IMR-90 (cell line): ENCODE measurements at regions of chr10 and their contacts with region 1.

Region 1: GRCh38 chr10:91908337-91909116 is 759 bp downstream of the FGFBP3 start:
- DNase-seq: peak; percentile 67
- ATAC-seq: peak; percentile 91
- H3K4me3 ChIP-seq: peak overlapping the region; percentile 72
- H3K27ac ChIP-seq: peak overlapping the region; percentile 24; the same call in 1 of the 2 replicates
- H3K4me1 ChIP-seq: no peaks in the 10 kb centered on the region
- H3K27me3 ChIP-seq: no peaks in the 10 kb centered on the region
- CTCF ChIP-seq: peak; percentile 38
- POLR2A ChIP-seq: no peak
- RAD21 ChIP-seq: no peak; the same call in 1 of the 2 replicates

Region 2: GRCh38 chr10:90871766-90872647 is 1036.5 kb before region 1 on chr10 and contains the start of gene RPP30:
- CTCF ChIA-PET with region 1: no interaction called
- POLR2A ChIA-PET with region 1: no interaction called
- dilution Hi-C with region 1: no loop called
- in situ Hi-C with region 1: no loop called
- intact Hi-C with region 1: loop called (anchors 5 kb)
- DNase-seq: peak; percentile 74
- ATAC-seq: peak; percentile 99
- H3K4me3 ChIP-seq: peak within 1 kb of the TSS; percentile 89
- H3K27ac ChIP-seq: peak within 1 kb of the TSS; percentile 77
- H3K4me1 ChIP-seq: peaks cover 2% of the 10 kb centered on the region; the same call in 1 of the 2 replicates
- H3K27me3 ChIP-seq: peaks cover 13% of the 10 kb centered on the region
- CTCF ChIP-seq: no peak
- POLR2A ChIP-seq: no peak
- RAD21 ChIP-seq: no peak
- total RNA-seq, gene RPP30: 45.2 and 45.8 TPM in 2 replicates

Region 3: GRCh38 chr10:90920986-90921666 is 987.4 kb before region 1 on chr10 and contains the start of gene ANKRD1:
- CTCF ChIA-PET with region 1: no interaction called
- POLR2A ChIA-PET with region 1: no interaction called
- dilution Hi-C with region 1: no loop called
- in situ Hi-C with region 1: loop called (anchors 25 kb)
- intact Hi-C with region 1: no loop called
- DNase-seq: peak; percentile 87
- ATAC-seq: peak; percentile 87
- H3K4me3 ChIP-seq: peak within 1 kb of the TSS; percentile 6; the same call in 1 of the 2 replicates
- H3K27ac ChIP-seq: peak within 1 kb of the TSS; percentile 43; the same call in 1 of the 2 replicates
- H3K4me1 ChIP-seq: peaks cover 7% of the 10 kb centered on the region
- H3K27me3 ChIP-seq: no peaks in the 10 kb centered on the region
- CTCF ChIP-seq: no peak
- POLR2A ChIP-seq: no peak
- RAD21 ChIP-seq: no peak
- total RNA-seq, gene ANKRD1: 10.8 and 19.4 TPM in 2 replicates

Region 4: DNA sequence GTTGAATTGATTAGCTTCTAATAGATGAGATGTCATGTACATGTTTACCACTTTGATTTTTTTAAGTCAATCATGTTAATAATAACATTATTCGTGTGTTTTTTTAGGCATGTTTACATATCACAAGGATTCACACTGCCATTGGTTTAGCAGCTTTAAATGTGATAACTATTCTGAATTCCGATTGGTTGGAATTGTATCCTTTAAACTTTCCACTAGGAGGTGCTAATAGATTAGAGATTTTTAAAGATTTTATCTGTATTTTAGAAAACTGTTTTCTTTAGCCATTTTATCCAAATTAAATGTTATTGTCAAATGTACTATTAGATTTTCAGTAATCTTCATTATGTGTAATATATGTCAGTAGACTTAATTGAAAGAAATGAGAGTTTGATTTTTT is 415.2 kb before region 1 on chr10:
- CTCF ChIA-PET with region 1: no interaction called
- POLR2A ChIA-PET with region 1: no interaction called
- dilution Hi-C with region 1: no loop called
- in situ Hi-C with region 1: no loop called
- intact Hi-C with region 1: loop called (anchors 10 kb)
- DNase-seq: peak; percentile 63
- ATAC-seq: no peak
- H3K4me3 ChIP-seq: no peak overlapping the region
- H3K27ac ChIP-seq: no peak overlapping the region
- H3K4me1 ChIP-seq: peaks cover 3% of the 10 kb centered on the region; the same call in 1 of the 2 replicates
- H3K27me3 ChIP-seq: no peaks in the 10 kb centered on the region
- CTCF ChIP-seq: peak; percentile 57
- POLR2A ChIP-seq: no peak
- RAD21 ChIP-seq: peak; percentile 54

Region 5: DNA sequence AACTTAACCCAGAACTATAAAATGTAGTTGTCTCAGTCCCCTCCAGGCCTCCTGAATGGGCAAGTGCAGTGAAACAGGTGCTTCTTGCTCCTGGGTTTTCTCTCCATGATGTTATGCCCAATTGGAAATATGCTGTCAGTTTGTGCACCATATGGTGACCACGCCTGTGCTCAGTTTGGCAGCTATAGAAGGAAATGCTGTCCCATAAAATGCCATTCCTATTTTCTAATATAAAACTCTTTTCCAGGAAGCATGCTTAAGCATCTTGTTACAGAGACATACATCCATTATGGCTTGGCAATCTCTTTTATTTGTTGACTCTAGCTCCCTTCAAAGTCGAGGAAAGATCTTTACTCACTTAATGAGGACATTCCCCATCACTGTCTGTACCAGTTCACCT is 44.4 kb before region 1 on chr10:
- CTCF ChIA-PET with region 1: interaction called, 3 read pairs
- POLR2A ChIA-PET with region 1: no interaction called
- dilution Hi-C with region 1: no loop called
- in situ Hi-C with region 1: no loop called
- intact Hi-C with region 1: loop called (anchors 2 kb)
- DNase-seq: no peak
- ATAC-seq: no peak; the same call in 1 of the 2 replicates
- H3K4me3 ChIP-seq: no peak overlapping the region
- H3K27ac ChIP-seq: no peak overlapping the region
- H3K4me1 ChIP-seq: peaks cover 4% of the 10 kb centered on the region
- H3K27me3 ChIP-seq: no peaks in the 10 kb centered on the region
- CTCF ChIP-seq: no peak
- POLR2A ChIP-seq: no peak
- RAD21 ChIP-seq: no peak